ENCODE measurements at regions of chr2 and their contacts with region 1.

Region 1: DNA sequence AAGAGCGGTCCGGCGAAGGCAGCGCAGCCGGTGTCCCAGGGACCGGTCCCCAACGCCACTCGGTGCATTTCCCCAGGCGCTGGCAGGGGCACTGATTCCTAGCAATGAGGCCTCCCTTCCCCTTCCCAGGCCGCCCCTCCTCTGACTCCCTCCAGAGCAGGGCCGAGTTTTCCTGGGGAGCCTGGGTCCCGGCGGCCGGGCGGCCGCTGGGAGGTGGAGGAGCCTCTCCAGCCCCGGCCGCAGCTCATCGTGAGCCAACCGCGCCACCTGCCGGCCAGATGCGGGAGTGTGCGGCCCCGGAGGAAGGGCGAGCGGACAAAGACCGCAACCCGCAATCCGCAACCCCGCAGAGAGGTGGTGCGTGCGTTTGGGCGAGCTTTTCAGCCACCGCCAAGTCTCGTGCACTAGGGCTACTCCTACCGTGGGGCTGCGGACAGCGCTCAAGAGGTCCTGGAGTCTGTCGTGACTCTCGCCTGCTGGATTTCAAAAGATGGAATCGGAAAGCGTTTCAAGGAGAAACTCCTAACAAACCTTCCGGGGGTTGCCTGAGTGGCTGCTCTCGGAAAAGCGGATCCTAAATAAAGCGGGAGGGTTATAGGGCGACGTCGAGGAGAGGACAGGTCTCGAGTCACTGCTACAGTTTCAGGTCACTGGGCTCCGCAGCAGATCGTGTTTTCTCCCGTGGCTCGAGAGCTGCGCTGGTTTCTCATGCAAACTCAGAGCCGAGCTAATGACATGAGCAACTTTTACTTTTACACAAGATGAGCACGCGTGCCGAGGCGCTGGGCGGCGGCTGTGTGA is 1.5 kb upstream of the EPHA4 start:
- DNase-seq: no peak
- ATAC-seq: peak; percentile 74
- H3K4me3 ChIP-seq: peak overlapping the region; percentile 82
- H3K27ac ChIP-seq: no peak overlapping the region
- H3K4me1 ChIP-seq: peaks cover 14% of the 10 kb centered on the region
- H3K27me3 ChIP-seq: peaks cover 0 to 16% of the 10 kb centered on the region in 2 experiments; a peak in 3 of 4 replicates
- CTCF ChIP-seq: peak; percentile 88 to 97 (median 93); a peak in 5 of 6 replicates
- EP300 ChIP-seq: no peak
- POLR2A ChIP-seq: no peak
- RAD21 ChIP-seq: peak; percentile 91

Region 2: GRCh38 chr2:219997341-219997851 is 1576.2 kb before region 1 on chr2:
- CTCF ChIA-PET with region 1: interaction called, 6 read pairs
- POLR2A ChIA-PET with region 1: no interaction called
- RAD21 ChIA-PET with region 1: interaction called, 10 read pairs
- SMC1A ChIA-PET with region 1: interaction called, 4 read pairs
- in situ Hi-C with region 1: no loop called
- intact Hi-C with region 1: loop called (anchors 10 kb)
- DNase-seq: no peak
- ATAC-seq: peak; percentile 59
- H3K4me3 ChIP-seq: no peak overlapping the region
- H3K27ac ChIP-seq: no peak overlapping the region
- H3K4me1 ChIP-seq: no peaks in the 10 kb centered on the region
- H3K27me3 ChIP-seq: peaks cover 2 to 4% of the 10 kb centered on the region in 2 experiments; a peak in 3 of 4 replicates
- CTCF ChIP-seq: peak; percentile 29 to 49 (median 32); a peak in 2 of 6 replicates
- EP300 ChIP-seq: no peak
- POLR2A ChIP-seq: no peak
- RAD21 ChIP-seq: peak; percentile 47

Region 3: DNA sequence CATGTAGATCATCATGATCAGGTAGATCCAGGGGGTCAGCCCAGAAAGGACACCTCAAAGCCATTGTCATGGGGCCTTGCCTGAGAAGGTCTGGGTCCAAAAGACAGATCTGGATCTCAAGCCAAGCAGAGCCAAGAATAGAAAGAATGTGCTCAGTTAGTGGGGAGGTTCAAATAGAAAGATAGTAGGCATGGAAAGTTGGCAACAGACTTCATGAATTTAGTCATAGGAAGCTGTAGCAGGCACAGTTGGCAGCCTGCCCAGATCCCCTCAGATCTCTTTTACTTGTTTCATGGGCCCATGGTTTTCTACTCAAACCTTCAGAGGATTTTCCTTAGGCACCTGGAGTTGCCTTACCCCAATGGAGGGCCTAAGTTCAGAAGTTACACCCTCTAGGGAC is 1179.2 kb before region 1 on chr2:
- CTCF ChIA-PET with region 1: no interaction called
- POLR2A ChIA-PET with region 1: no interaction called
- RAD21 ChIA-PET with region 1: no interaction called
- SMC1A ChIA-PET with region 1: no interaction called
- in situ Hi-C with region 1: no loop called
- intact Hi-C with region 1: loop called (anchors 5 kb)
- DNase-seq: no peak
- ATAC-seq: no peak
- H3K4me3 ChIP-seq: no peak overlapping the region
- H3K27ac ChIP-seq: no peak overlapping the region
- H3K4me1 ChIP-seq: no peaks in the 10 kb centered on the region
- H3K27me3 ChIP-seq: no peaks in the 10 kb centered on the region
- CTCF ChIP-seq: no peak
- EP300 ChIP-seq: no peak
- POLR2A ChIP-seq: no peak
- RAD21 ChIP-seq: no peak

Region 4: DNA sequence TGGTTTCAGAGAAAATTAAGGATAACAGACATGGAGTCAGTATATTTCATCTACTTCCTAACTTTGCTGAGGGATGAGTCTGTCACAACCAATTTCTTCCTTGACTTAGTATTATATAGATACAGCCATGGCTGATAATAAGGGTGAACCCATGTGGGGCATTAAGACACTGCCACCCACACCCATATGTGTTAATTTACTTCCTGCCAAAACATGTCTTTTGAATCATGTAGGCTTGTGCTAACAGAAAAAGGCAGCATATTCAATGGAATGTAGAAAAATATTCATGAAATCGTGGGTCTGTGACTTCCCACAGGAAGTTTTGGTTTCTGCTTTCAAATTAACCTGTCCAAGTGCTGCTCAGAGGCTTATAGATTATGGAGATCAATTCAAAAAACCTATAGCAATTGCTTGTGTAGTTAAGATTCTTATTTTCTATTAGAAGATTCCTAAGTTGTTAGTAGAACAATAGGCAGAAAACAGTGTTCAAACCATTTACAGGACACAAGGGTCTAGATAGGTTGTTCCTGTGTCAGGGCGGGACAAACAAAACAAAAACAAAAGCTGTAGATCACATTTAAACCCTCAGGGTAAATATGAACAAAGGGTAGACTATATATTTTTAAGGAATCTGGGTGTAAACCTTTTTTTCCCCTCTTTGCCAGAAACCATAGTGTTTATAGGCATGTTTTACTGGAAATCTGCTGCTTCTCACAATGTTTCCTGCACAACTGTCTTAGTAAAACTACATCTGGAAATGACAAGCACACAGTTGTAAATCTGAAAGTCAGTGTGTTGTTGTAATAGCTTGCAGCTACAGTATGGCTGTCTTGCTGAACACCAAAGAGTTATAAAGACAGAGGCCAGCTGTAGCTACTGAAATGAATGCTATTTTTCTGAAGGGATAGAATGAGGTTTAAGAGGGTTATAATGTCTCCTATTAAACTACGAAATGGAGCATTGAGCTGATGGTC is 692.7 kb before region 1 on chr2:
- CTCF ChIA-PET with region 1: no interaction called
- POLR2A ChIA-PET with region 1: no interaction called
- RAD21 ChIA-PET with region 1: no interaction called
- SMC1A ChIA-PET with region 1: no interaction called
- in situ Hi-C with region 1: no loop called
- intact Hi-C with region 1: loop called (anchors 10 kb)
- DNase-seq: no peak
- ATAC-seq: no peak
- H3K4me3 ChIP-seq: no peak overlapping the region
- H3K27ac ChIP-seq: no peak overlapping the region
- H3K4me1 ChIP-seq: no peaks in the 10 kb centered on the region
- H3K27me3 ChIP-seq: no peaks in the 10 kb centered on the region
- CTCF ChIP-seq: no peak
- EP300 ChIP-seq: no peak
- POLR2A ChIP-seq: no peak
- RAD21 ChIP-seq: no peak

Region 5: DNA sequence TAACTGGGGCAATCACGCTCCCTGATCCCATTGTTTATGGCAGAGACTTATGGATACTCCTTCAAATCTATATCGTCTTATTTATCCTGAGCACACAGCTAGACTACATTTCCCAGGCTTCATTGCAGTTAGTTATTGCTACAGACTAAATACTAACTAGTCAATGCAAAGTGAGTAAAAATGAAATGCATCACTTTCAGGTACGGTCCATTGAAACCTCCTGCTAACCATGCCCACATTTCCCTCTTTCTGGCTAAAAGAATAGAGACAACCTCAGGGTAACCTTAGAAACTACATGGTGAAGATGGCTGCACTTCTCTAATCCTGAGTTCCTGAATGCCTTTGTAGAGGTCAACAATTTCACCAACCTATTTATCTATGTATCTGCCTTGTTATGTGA is 438.9 kb before region 1 on chr2:
- CTCF ChIA-PET with region 1: no interaction called
- POLR2A ChIA-PET with region 1: no interaction called
- RAD21 ChIA-PET with region 1: no interaction called
- SMC1A ChIA-PET with region 1: interaction called, 4 read pairs
- in situ Hi-C with region 1: no loop called
- intact Hi-C with region 1: loop called (anchors 5 kb)
- DNase-seq: no peak
- ATAC-seq: peak; percentile 56
- H3K4me3 ChIP-seq: no peak overlapping the region
- H3K27ac ChIP-seq: no peak overlapping the region
- H3K4me1 ChIP-seq: peaks cover 32% of the 10 kb centered on the region
- H3K27me3 ChIP-seq: no peaks in the 10 kb centered on the region
- CTCF ChIP-seq: no peak
- EP300 ChIP-seq: no peak
- POLR2A ChIP-seq: no peak
- RAD21 ChIP-seq: no peak

Region 6: DNA sequence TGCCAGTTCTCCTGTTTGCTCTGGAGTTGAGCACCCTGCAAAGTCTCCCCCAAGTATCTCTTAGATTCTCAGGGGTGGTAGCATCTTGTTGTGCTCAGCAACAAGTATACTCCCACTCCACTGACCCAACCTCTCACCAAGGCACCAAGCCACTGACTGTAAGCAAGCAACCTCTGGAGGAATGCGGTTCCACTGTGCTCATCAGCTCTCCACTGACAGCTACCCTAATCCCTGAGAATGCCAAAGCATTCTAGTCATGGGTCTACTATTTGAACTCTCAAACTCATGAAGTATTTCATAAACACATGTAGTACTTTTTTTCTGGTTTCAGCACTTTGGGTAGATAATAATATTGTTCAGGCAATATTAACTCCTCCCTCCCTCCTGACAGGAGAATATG is 171.6 kb before region 1 on chr2:
- CTCF ChIA-PET with region 1: no interaction called
- POLR2A ChIA-PET with region 1: no interaction called
- RAD21 ChIA-PET with region 1: no interaction called
- SMC1A ChIA-PET with region 1: no interaction called
- in situ Hi-C with region 1: no loop called
- intact Hi-C with region 1: no loop called
- DNase-seq: no peak
- ATAC-seq: no peak
- H3K4me3 ChIP-seq: no peak overlapping the region
- H3K27ac ChIP-seq: no peak overlapping the region
- H3K4me1 ChIP-seq: no peaks in the 10 kb centered on the region
- H3K27me3 ChIP-seq: no peaks in the 10 kb centered on the region
- CTCF ChIP-seq: no peak
- EP300 ChIP-seq: no peak
- POLR2A ChIP-seq: no peak
- RAD21 ChIP-seq: no peak

Region 7: DNA sequence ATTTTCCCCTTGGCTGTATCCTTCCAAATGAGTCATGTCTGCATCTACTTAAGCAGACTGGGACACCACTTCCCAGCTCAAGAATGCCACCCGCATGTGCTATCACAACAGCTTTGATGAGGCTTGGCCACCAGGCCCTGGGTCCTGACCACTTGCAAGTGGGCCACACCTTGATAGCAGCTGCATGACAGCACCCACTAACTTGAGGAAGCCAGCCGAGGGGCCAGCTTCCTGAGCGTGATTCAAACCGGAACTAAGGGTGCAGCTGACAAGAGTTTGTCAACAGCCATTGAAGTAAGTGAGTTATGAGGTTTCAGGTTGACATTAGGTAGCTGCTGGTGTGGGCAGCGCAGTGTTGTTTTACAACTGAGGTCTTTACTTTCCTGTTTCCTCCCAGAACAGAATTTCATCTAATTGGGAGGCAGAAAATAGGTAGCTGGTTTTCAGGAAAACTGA is 55.9 kb before region 1 on chr2:
- CTCF ChIA-PET with region 1: interaction called, 3 read pairs
- POLR2A ChIA-PET with region 1: no interaction called
- RAD21 ChIA-PET with region 1: no interaction called
- SMC1A ChIA-PET with region 1: no interaction called
- in situ Hi-C with region 1: no loop called
- intact Hi-C with region 1: loop called (anchors 2 kb)
- DNase-seq: peak; percentile 57
- ATAC-seq: peak; percentile 85
- H3K4me3 ChIP-seq: no peak overlapping the region
- H3K27ac ChIP-seq: peak overlapping the region; percentile 39
- H3K4me1 ChIP-seq: peaks cover 27% of the 10 kb centered on the region
- H3K27me3 ChIP-seq: no peaks in the 10 kb centered on the region
- CTCF ChIP-seq: no peak
- EP300 ChIP-seq: peak; percentile 88 to 96
- POLR2A ChIP-seq: no peak
- RAD21 ChIP-seq: no peak